ENCODE measurements at regions of chr5 and their contacts with region 1.

Region 1: GRCh38 chr5:78984439-78985115 is 533 bp downstream of the ARSB start:
- DNase-seq: peak; percentile 83
- ATAC-seq: peak; percentile 55
- H3K4me3 Mint-ChIP-seq: peak overlapping the region; percentile 90
- H3K27ac Mint-ChIP-seq: peak overlapping the region; percentile 91
- H3K4me1 Mint-ChIP-seq: peaks cover 46% of the 10 kb centered on the region
- H3K27me3 Mint-ChIP-seq: no peaks in the 10 kb centered on the region
- CTCF ChIP-seq: no peak

Region 2: GRCh38 chr5:77852514-77853352 is 1131.8 kb before region 1 on chr5:
- CTCF ChIA-PET with region 1: no interaction called
- POLR2A ChIA-PET with region 1: no interaction called
- intact Hi-C with region 1: loop called (anchors 10 kb)
- DNase-seq: peak; percentile 68
- ATAC-seq: peak; percentile 89
- H3K4me3 Mint-ChIP-seq: peak overlapping the region; percentile 81
- H3K27ac Mint-ChIP-seq: peak overlapping the region; percentile 92
- H3K4me1 Mint-ChIP-seq: peaks cover 17% of the 10 kb centered on the region
- H3K27me3 Mint-ChIP-seq: no peaks in the 10 kb centered on the region
- CTCF ChIP-seq: no peak

Region 3: GRCh38 chr5:78260771-78261170 is 723.8 kb before region 1 on chr5:
- CTCF ChIA-PET with region 1: no interaction called
- POLR2A ChIA-PET with region 1: no interaction called
- intact Hi-C with region 1: no loop called
- DNase-seq: no peak
- ATAC-seq: no peak
- H3K4me3 Mint-ChIP-seq: no peak overlapping the region
- H3K27ac Mint-ChIP-seq: no peak overlapping the region
- H3K4me1 Mint-ChIP-seq: no peaks in the 10 kb centered on the region
- H3K27me3 Mint-ChIP-seq: no peaks in the 10 kb centered on the region
- CTCF ChIP-seq: no peak

Region 4: DNA sequence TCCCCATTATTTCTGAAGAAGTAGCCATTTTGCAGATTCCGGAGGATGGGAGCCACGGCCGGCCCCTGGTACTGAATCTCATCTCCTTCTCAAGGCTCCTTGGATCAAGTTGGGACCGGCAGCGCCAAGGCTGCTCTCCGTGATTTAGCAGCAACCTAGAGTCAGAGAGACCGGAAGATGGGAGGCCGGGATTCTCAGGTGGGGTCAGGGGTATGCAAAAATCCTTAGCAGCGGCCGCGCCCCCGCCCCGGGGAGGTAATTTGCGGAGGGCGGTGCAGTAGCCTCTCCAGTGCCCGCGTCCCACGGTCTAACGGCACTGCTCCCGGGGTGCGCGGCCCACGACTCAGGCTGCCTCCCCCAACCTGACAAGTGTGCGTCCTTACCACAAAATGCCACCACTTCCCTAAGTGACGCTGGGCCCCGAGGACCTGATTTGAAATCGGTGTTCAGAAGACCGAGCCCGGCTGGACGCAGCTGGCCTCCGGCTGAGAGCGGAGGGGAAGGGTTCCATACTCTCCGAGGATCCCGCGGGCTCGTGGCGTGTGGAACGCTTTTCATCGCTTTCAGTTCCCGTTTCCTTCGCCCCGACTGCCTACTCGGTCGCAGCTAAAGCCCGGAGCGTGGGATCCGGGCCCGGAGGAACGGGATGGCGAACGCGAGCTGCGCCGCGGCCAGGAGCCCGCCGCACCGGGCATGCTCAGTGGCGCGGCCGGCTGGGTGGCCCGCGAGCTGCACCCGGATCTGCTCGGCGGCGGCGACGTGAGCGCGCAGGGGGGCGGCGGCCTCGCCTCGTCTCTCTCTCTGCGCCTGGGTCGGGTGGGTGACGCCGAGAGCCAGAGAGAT is 624.5 kb before region 1 on chr5 and contains the start of gene SCAMP1:
- CTCF ChIA-PET with region 1: interaction called, 3 read pairs
- POLR2A ChIA-PET with region 1: interaction called, 16 read pairs
- intact Hi-C with region 1: loop called (anchors 1 kb)
- DNase-seq: peak; percentile 99
- ATAC-seq: peak; percentile 87
- H3K4me3 Mint-ChIP-seq: peak within 1 kb of the TSS; percentile 95
- H3K27ac Mint-ChIP-seq: peak within 1 kb of the TSS; percentile 96
- H3K4me1 Mint-ChIP-seq: peaks cover 33% of the 10 kb centered on the region
- H3K27me3 Mint-ChIP-seq: no peaks in the 10 kb centered on the region
- CTCF ChIP-seq: no peak
- total RNA-seq, gene SCAMP1: 8.5 and 9.6 TPM in 2 replicates

Region 5: DNA sequence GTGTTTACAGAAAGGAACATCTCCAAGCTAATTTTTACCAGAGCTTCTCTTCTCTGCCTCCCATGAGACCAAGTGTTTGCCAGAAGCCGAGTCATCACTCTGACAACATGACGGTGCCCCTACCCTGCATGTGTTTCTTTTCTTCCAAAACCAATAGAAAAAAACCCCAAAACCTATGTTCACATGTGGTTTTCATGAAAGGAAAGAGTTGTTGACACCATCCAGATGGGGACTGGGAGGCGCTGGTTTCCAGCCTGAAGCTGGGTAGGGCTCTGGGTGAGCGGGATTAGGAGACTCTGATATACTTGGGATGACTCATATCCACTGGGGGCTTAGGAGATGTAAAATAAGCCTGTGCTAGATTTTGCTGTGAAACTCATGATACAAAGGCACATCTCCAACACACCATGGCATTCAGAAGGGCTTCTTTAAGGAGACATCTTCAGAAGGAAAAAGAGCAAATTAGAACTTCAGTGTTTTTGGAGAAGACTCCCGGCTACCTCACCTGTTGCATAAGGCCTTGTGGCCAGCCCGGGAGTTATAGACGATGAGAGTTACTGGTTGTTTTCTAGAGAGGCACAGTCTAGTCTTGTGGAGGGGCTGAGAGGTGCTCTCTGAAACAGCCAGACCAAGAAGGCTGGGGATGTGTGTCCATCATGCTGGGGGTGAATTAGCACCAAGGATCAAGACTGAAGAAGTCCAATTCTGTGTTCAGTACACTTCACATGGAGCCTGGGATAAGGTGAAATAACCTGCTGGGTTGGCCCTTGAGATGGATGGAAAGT is 227.1 kb before region 1 on chr5:
- CTCF ChIA-PET with region 1: no interaction called
- POLR2A ChIA-PET with region 1: interaction called, 6 read pairs
- intact Hi-C with region 1: loop called (anchors 1 kb)
- DNase-seq: no peak
- ATAC-seq: peak; percentile 38
- H3K4me3 Mint-ChIP-seq: peak overlapping the region; percentile 64
- H3K27ac Mint-ChIP-seq: peak overlapping the region; percentile 95
- H3K4me1 Mint-ChIP-seq: peaks cover 78% of the 10 kb centered on the region
- H3K27me3 Mint-ChIP-seq: no peaks in the 10 kb centered on the region
- CTCF ChIP-seq: no peak

Region 6: GRCh38 chr5:78919796-78920195 is 64.8 kb before region 1 on chr5:
- CTCF ChIA-PET with region 1: no interaction called
- POLR2A ChIA-PET with region 1: no interaction called
- intact Hi-C with region 1: no loop called
- DNase-seq: no peak
- ATAC-seq: no peak
- H3K4me3 Mint-ChIP-seq: no peak overlapping the region
- H3K27ac Mint-ChIP-seq: no peak overlapping the region
- H3K4me1 Mint-ChIP-seq: no peaks in the 10 kb centered on the region
- H3K27me3 Mint-ChIP-seq: no peaks in the 10 kb centered on the region
- CTCF ChIP-seq: no peak

Region 7: GRCh38 chr5:79109527-79110492 is 125.2 kb after region 1 on chr5:
- CTCF ChIA-PET with region 1: no interaction called
- POLR2A ChIA-PET with region 1: no interaction called
- intact Hi-C with region 1: loop called (anchors 1 kb)
- DNase-seq: no peak
- ATAC-seq: peak; percentile 42
- H3K4me3 Mint-ChIP-seq: no peak overlapping the region
- H3K27ac Mint-ChIP-seq: no peak overlapping the region
- H3K4me1 Mint-ChIP-seq: no peaks in the 10 kb centered on the region
- H3K27me3 Mint-ChIP-seq: peaks cover 57% of the 10 kb centered on the region
- CTCF ChIP-seq: no peak

Region 8: GRCh38 chr5:79514391-79515105 is 530.0 kb after region 1 on chr5:
- CTCF ChIA-PET with region 1: no interaction called
- POLR2A ChIA-PET with region 1: interaction called, 14 read pairs
- intact Hi-C with region 1: loop called (anchors 2 kb)
- DNase-seq: peak; percentile 85
- ATAC-seq: peak; percentile 77
- H3K4me3 Mint-ChIP-seq: peak overlapping the region; percentile 91
- H3K27ac Mint-ChIP-seq: peak overlapping the region; percentile 89
- H3K4me1 Mint-ChIP-seq: peaks cover 28% of the 10 kb centered on the region
- H3K27me3 Mint-ChIP-seq: peaks cover 24% of the 10 kb centered on the region
- CTCF ChIP-seq: no peak